CD4-positive, alpha-beta T cell (primary cell): ENCODE measurements at regions of chr7 and their contacts with region 1.

Region 1: GRCh38 chr7:93117852-93118530 is at the start of gene SAMD9:
- DNase-seq: peak in 13 of 14 experiments; percentile 9 to 93 (median 44)
- ATAC-seq: peak; percentile 99
- H3K4me3 ChIP-seq: peak within 1 kb of the TSS; percentile 64
- H3K4me3 Mint-ChIP-seq: peak within 1 kb of the TSS; percentile 86
- H3K27ac ChIP-seq: peak within 1 kb of the TSS; percentile 55 to 82
- H3K27ac Mint-ChIP-seq: peak within 1 kb of the TSS; percentile 78
- H3K4me1 ChIP-seq: peaks cover 21% of the 10 kb centered on the region
- H3K4me1 Mint-ChIP-seq: peaks cover 53% of the 10 kb centered on the region
- H3K27me3 ChIP-seq: no peaks in the 10 kb centered on the region
- H3K27me3 Mint-ChIP-seq: no peaks in the 10 kb centered on the region
- CTCF ChIP-seq: no peak
- total RNA-seq, gene SAMD9: 19.1 to 21.5 TPM

Region 2: GRCh38 chr7:92528188-92528957 is 589.6 kb before region 1 on chr7 and contains the starts of genes PEX1 and RBM48:
- CTCF ChIA-PET with region 1: interaction called, 5 read pairs
- POLR2A ChIA-PET with region 1: interaction called, 21 read pairs
- intact Hi-C with region 1: loop called in 1 of 2 experiments (anchors 5 kb)
- DNase-seq: peak; percentile 89 to 99 (median 94)
- ATAC-seq: peak; percentile 92
- H3K4me3 ChIP-seq: peak within 1 kb of the TSS; percentile 94
- H3K4me3 Mint-ChIP-seq: peak within 1 kb of the TSS; percentile 96
- H3K27ac ChIP-seq: peak within 1 kb of the TSS; percentile 86 to 97
- H3K27ac Mint-ChIP-seq: peak within 1 kb of the TSS; percentile 94
- H3K4me1 ChIP-seq: peaks cover 19% of the 10 kb centered on the region
- H3K4me1 Mint-ChIP-seq: peaks cover 52% of the 10 kb centered on the region
- H3K27me3 ChIP-seq: no peaks in the 10 kb centered on the region
- H3K27me3 Mint-ChIP-seq: no peaks in the 10 kb centered on the region
- CTCF ChIP-seq: peak; percentile 42
- total RNA-seq, gene PEX1: 19.7 to 20.7 TPM
- total RNA-seq, gene RBM48: 45.4 to 47.3 TPM

Region 3: GRCh38 chr7:92843034-92843760 is 274.8 kb before region 1 on chr7:
- CTCF ChIA-PET with region 1: no interaction called
- POLR2A ChIA-PET with region 1: no interaction called
- intact Hi-C with region 1: loop called in 1 of 2 experiments (anchors 5 kb)
- DNase-seq: no peak
- ATAC-seq: no peak
- H3K4me3 ChIP-seq: no peak overlapping the region
- H3K4me3 Mint-ChIP-seq: no peak overlapping the region
- H3K27ac ChIP-seq: no peak overlapping the region
- H3K27ac Mint-ChIP-seq: no peak overlapping the region
- H3K4me1 ChIP-seq: no peaks in the 10 kb centered on the region
- H3K4me1 Mint-ChIP-seq: no peaks in the 10 kb centered on the region
- H3K27me3 ChIP-seq: no peaks in the 10 kb centered on the region
- H3K27me3 Mint-ChIP-seq: peaks cover 19% of the 10 kb centered on the region
- CTCF ChIP-seq: no peak

Region 4: GRCh38 chr7:94004024-94004951 is 886.3 kb after region 1 on chr7 and contains the start of gene BET1:
- CTCF ChIA-PET with region 1: no interaction called
- POLR2A ChIA-PET with region 1: no interaction called
- intact Hi-C with region 1: loop called in 1 of 2 experiments (anchors 10 kb)
- DNase-seq: peak; percentile 84 to 98 (median 90)
- ATAC-seq: peak; percentile 95
- H3K4me3 ChIP-seq: peak within 1 kb of the TSS; percentile 75
- H3K4me3 Mint-ChIP-seq: peak within 1 kb of the TSS; percentile 99
- H3K27ac ChIP-seq: peak within 1 kb of the TSS; percentile 76 to 78
- H3K27ac Mint-ChIP-seq: peak within 1 kb of the TSS; percentile 99
- H3K4me1 ChIP-seq: peaks cover 14% of the 10 kb centered on the region
- H3K4me1 Mint-ChIP-seq: peaks cover 53% of the 10 kb centered on the region
- H3K27me3 ChIP-seq: no peaks in the 10 kb centered on the region
- H3K27me3 Mint-ChIP-seq: peaks cover 18% of the 10 kb centered on the region
- CTCF ChIP-seq: no peak
- total RNA-seq, gene BET1: 7.4 to 9.5 TPM